Naive thymus-derived CD4-positive, alpha-beta T cell (primary cell): ENCODE measurements at regions of chr14 and their contacts with region 1.

Region 1: GRCh38 chr14:70061108-70061507 is 127.6 kb downstream of the SLC8A3 start:
- DNase-seq: no peak
- ATAC-seq: no peak
- H3K4me3 ChIP-seq: no peak overlapping the region
- H3K4me3 Mint-ChIP-seq: no peak overlapping the region
- H3K27ac ChIP-seq: no peak overlapping the region
- H3K27ac Mint-ChIP-seq: no peak overlapping the region
- H3K4me1 ChIP-seq: no peaks in the 10 kb centered on the region
- H3K4me1 Mint-ChIP-seq: no peaks in the 10 kb centered on the region
- H3K27me3 ChIP-seq: no peaks in the 10 kb centered on the region
- H3K27me3 Mint-ChIP-seq: peaks cover 8 to 47% (median 36%) of the 10 kb centered on the region in 5 donors

Region 2: DNA sequence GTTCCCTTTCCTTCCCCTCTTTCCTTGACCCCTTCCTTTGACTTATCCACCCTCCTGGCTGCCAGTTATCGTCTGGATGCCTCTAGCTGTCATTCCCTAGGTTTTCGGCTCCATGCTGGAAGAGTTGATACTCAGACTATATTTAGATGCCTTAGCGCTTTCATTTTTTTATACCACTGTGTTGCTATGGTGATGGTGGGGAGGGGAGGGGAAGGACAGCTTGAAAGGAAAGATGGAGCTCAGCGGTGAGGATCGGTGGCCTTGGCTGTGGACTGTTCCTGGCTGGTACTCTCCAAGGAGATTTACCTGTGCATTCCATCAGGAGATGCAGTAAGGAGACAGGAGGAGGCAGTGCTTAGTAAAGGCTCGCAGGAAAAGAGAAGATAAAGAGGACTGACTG is 19.0 kb after region 1 on chr14:
- CTCF ChIA-PET with region 1: no interaction called
- POLR2A ChIA-PET with region 1: no interaction called
- intact Hi-C with region 1: loop called in 1 of 2 experiments (anchors 1 kb)
- DNase-seq: no peak
- ATAC-seq: no peak
- H3K4me3 ChIP-seq: no peak overlapping the region
- H3K4me3 Mint-ChIP-seq: no peak overlapping the region
- H3K27ac ChIP-seq: no peak overlapping the region
- H3K27ac Mint-ChIP-seq: no peak overlapping the region
- H3K4me1 ChIP-seq: no peaks in the 10 kb centered on the region
- H3K4me1 Mint-ChIP-seq: peaks cover 0 to 1% (median 0%) of the 10 kb centered on the region in 7 donors
- H3K27me3 ChIP-seq: peaks cover 0 to 2% of the 10 kb centered on the region in 2 donors
- H3K27me3 Mint-ChIP-seq: peaks cover 36 to 71% (median 51%) of the 10 kb centered on the region in 5 donors

Region 3: GRCh38 chr14:70239802-70240201 is 178.7 kb after region 1 on chr14:
- CTCF ChIA-PET with region 1: no interaction called
- POLR2A ChIA-PET with region 1: no interaction called
- intact Hi-C with region 1: no loop called
- DNase-seq: no peak
- ATAC-seq: no peak
- H3K4me3 ChIP-seq: no peak overlapping the region
- H3K4me3 Mint-ChIP-seq: no peak overlapping the region
- H3K27ac ChIP-seq: no peak overlapping the region
- H3K27ac Mint-ChIP-seq: no peak overlapping the region
- H3K4me1 ChIP-seq: no peaks in the 10 kb centered on the region
- H3K4me1 Mint-ChIP-seq: peaks cover 0 to 2% (median 0%) of the 10 kb centered on the region in 7 donors
- H3K27me3 ChIP-seq: no peaks in the 10 kb centered on the region
- H3K27me3 Mint-ChIP-seq: peaks cover 41 to 71% (median 44%) of the 10 kb centered on the region in 5 donors